ENCODE measurements at regions of chr7 and their contacts with region 1.

Region 1: GRCh38 chr7:136009488-136010079 is 32.4 kb upstream of the MTPN start:
- DNase-seq: no peak
- ATAC-seq: no peak
- H3K4me3 Mint-ChIP-seq: no peak overlapping the region
- H3K27ac Mint-ChIP-seq: no peak overlapping the region
- H3K4me1 Mint-ChIP-seq: peaks cover 6% of the 10 kb centered on the region
- H3K27me3 Mint-ChIP-seq: peaks cover 6% of the 10 kb centered on the region
- CTCF ChIP-seq: peak; percentile 86

Region 2: DNA sequence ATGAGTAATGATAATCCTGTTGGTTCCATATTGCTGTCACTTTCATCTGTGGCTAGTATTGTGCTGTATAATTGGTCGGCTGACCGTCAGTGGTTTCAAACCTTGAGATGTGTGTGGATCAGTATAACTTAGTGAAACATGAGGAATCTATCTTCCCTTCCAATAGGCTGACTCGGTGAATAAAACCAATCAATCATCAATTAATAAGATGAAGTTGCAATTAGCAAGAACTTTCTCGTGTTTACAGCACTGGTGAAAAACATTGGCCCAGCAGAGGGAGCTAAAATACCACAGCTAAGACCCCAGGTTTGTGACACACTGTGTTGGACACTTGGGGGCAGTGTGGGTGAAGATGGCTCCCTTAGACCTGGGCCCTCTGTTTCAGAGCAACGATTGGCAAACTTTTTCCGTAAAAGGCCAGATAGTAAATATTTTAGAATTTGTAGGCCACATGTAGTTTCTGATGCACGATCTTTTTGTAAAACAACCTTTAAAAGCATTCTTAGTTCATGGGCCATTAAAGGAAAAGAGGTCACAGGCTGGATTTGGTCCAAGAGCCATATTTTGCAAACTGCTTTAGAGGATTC is 728.1 kb before region 1 on chr7:
- CTCF ChIA-PET with region 1: no interaction called
- POLR2A ChIA-PET with region 1: no interaction called
- intact Hi-C with region 1: loop called (anchors 1 kb)
- DNase-seq: peak; percentile 24
- ATAC-seq: peak; percentile 100
- H3K4me3 Mint-ChIP-seq: no peak overlapping the region
- H3K27ac Mint-ChIP-seq: no peak overlapping the region
- H3K4me1 Mint-ChIP-seq: peaks cover 10% of the 10 kb centered on the region
- H3K27me3 Mint-ChIP-seq: peaks cover 6% of the 10 kb centered on the region
- CTCF ChIP-seq: peak; percentile 98

Region 3: GRCh38 chr7:135662373-135663114 is 347.0 kb before region 1 on chr7 and contains the start of gene STMP1:
- CTCF ChIA-PET with region 1: no interaction called
- POLR2A ChIA-PET with region 1: no interaction called
- intact Hi-C with region 1: loop called (anchors 1 kb)
- DNase-seq: peak; percentile 96
- ATAC-seq: peak; percentile 98
- H3K4me3 Mint-ChIP-seq: peak within 1 kb of the TSS; percentile 91
- H3K27ac Mint-ChIP-seq: peak within 1 kb of the TSS; percentile 79
- H3K4me1 Mint-ChIP-seq: peaks cover 39% of the 10 kb centered on the region
- H3K27me3 Mint-ChIP-seq: no peaks in the 10 kb centered on the region
- CTCF ChIP-seq: no peak
- total RNA-seq, gene STMP1: 24.2 and 26.2 TPM in 2 replicates

Region 4: DNA sequence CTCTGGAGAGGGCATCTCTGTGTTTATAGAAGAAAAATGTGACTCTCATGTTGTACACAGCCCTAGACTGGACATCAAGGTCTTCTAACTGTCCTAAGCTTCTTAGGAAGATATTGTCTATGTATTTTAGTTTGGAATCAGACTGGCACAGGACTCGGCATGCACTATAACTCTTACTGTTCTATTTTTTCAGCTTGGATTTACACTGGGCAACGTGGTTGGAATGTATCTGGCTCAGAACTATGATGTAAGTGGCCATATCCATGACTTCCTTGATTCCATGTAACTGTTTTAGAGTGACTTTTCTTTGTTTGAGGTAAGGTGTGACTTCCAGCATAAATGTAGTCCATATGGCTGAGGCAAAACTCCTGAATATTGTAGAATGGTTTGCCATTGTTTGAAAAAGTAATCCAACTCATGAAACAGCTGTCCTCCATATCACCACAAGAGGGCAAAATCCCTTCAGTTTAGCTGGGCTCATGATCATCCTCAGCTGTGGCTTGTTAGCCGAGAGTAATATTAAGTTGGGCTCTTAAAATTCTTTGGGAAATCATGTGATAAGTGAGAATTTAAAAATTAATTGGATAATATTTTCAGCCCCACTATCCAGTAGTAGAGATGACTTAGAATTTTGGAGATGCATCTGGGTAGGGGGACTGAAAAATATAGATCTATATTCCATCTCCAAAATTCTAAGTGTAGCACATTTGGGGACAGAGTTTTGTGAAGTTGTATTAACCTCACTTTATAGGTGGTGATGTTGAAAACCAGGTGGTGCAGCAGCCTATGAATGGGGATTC is 336.8 kb before region 1 on chr7:
- CTCF ChIA-PET with region 1: interaction called, 4 read pairs
- POLR2A ChIA-PET with region 1: no interaction called
- intact Hi-C with region 1: loop called (anchors 1 kb)
- DNase-seq: no peak
- ATAC-seq: peak; percentile 57
- H3K4me3 Mint-ChIP-seq: no peak overlapping the region
- H3K27ac Mint-ChIP-seq: no peak overlapping the region
- H3K4me1 Mint-ChIP-seq: peaks cover 14% of the 10 kb centered on the region
- H3K27me3 Mint-ChIP-seq: no peaks in the 10 kb centered on the region
- CTCF ChIP-seq: peak; percentile 39

Region 5: GRCh38 chr7:135801045-135801693 is 208.4 kb before region 1 on chr7:
- CTCF ChIA-PET with region 1: interaction called, 87 read pairs
- POLR2A ChIA-PET with region 1: interaction called, 3 read pairs
- intact Hi-C with region 1: loop called (anchors 1 kb)
- DNase-seq: no peak
- ATAC-seq: peak; percentile 49
- H3K4me3 Mint-ChIP-seq: no peak overlapping the region
- H3K27ac Mint-ChIP-seq: no peak overlapping the region
- H3K4me1 Mint-ChIP-seq: peaks cover 7% of the 10 kb centered on the region
- H3K27me3 Mint-ChIP-seq: peaks cover 17% of the 10 kb centered on the region
- CTCF ChIP-seq: peak; percentile 28

Region 6: DNA sequence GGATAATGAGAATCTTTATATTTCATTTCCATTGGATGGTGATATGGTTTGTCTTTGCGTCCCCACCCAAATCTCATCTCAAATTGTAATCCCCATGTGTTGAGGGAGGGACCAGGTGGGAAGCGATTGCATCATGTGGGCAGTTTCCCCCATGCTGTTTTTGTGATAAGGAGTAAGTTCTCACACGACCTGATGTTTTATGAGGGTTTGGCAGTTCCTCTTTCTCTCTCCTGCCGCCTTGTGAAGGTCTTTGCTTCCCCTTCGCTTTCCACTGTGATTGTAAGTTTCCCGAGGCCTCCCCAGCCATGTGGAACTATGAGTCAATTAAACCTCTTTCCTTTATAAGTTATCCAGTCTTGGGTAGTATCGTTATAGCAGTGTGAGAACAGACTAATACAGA is 91.9 kb before region 1 on chr7:
- CTCF ChIA-PET with region 1: no interaction called
- POLR2A ChIA-PET with region 1: no interaction called
- intact Hi-C with region 1: loop called (anchors 5 kb)
- DNase-seq: no peak
- ATAC-seq: no peak
- H3K4me3 Mint-ChIP-seq: peak overlapping the region; percentile 29
- H3K27ac Mint-ChIP-seq: peak overlapping the region; percentile 60
- H3K4me1 Mint-ChIP-seq: peaks cover 20% of the 10 kb centered on the region
- H3K27me3 Mint-ChIP-seq: no peaks in the 10 kb centered on the region
- CTCF ChIP-seq: no peak

Region 7: GRCh38 chr7:135993950-135994349 is 15.6 kb before region 1 on chr7:
- CTCF ChIA-PET with region 1: interaction called, 14 read pairs
- POLR2A ChIA-PET with region 1: no interaction called
- intact Hi-C with region 1: no loop called
- DNase-seq: no peak
- ATAC-seq: peak; percentile 45
- H3K4me3 Mint-ChIP-seq: peak overlapping the region; percentile 38
- H3K27ac Mint-ChIP-seq: peak overlapping the region; percentile 41
- H3K4me1 Mint-ChIP-seq: peaks cover 31% of the 10 kb centered on the region
- H3K27me3 Mint-ChIP-seq: no peaks in the 10 kb centered on the region
- CTCF ChIP-seq: no peak

Region 8: GRCh38 chr7:136976504-136977251 is 967.1 kb after region 1 on chr7:
- CTCF ChIA-PET with region 1: no interaction called
- POLR2A ChIA-PET with region 1: no interaction called
- intact Hi-C with region 1: no loop called
- DNase-seq: no peak
- ATAC-seq: no peak
- H3K4me3 Mint-ChIP-seq: no peak overlapping the region
- H3K27ac Mint-ChIP-seq: no peak overlapping the region
- H3K4me1 Mint-ChIP-seq: no peaks in the 10 kb centered on the region
- H3K27me3 Mint-ChIP-seq: no peaks in the 10 kb centered on the region
- CTCF ChIP-seq: no peak

Measured in activated B cell treated with CpG ODN at 0.5 μM for 24 hours (primary cell).